Breast epithelium (tissue), 4 donors: ENCODE measurements at regions of chr1 and their contacts with region 1.

Region 1: GRCh38 chr1:234728740-234729139 is 118.8 kb upstream of the IRF2BP2 start:
- DNase-seq: no peak
- H3K4me3 ChIP-seq: no peak overlapping the region
- H3K27ac ChIP-seq: peak overlapping the region; percentile 98 to 99
- H3K4me1 ChIP-seq: peaks cover 16 to 32% of the 10 kb centered on the region in 2 donors
- H3K27me3 ChIP-seq: no peaks in the 10 kb centered on the region
- CTCF ChIP-seq: no peak
- POLR2A ChIP-seq: no peak

Region 2: DNA sequence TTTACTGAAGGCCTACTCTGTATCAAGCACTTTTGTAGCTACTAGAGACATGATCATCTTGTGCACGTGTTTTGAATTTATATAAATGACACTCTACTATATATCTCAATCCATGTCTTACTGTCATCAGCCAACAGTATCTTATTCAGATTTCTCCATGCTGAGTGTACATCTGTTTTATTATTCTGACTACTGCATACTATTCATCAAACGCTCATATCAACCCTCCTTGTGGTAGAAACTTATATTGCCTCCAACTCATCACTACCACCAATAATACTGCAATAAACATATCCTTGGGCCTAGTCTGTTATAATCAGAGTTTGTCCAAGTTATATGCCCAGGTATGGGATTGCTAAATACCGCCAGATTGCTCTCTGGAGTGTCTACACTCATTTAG is 37.2 kb before region 1 on chr1:
- intact Hi-C with region 1: no loop called
- DNase-seq: no peak
- H3K4me3 ChIP-seq: no peak overlapping the region
- H3K27ac ChIP-seq: no peak overlapping the region
- H3K4me1 ChIP-seq: no peaks in the 10 kb centered on the region
- H3K27me3 ChIP-seq: no peaks in the 10 kb centered on the region
- CTCF ChIP-seq: no peak
- POLR2A ChIP-seq: no peak

Region 3: GRCh38 chr1:234745844-234746797 is 17.4 kb after region 1 on chr1:
- intact Hi-C with region 1: loop called (anchors 1 kb)
- DNase-seq: no peak
- H3K4me3 ChIP-seq: no peak overlapping the region
- H3K27ac ChIP-seq: peak overlapping the region; percentile 72 to 84
- H3K4me1 ChIP-seq: peaks cover 0 to 3% of the 10 kb centered on the region in 2 donors
- H3K27me3 ChIP-seq: no peaks in the 10 kb centered on the region
- CTCF ChIP-seq: no peak
- POLR2A ChIP-seq: no peak